Stomach (tissue), 19 donors: ENCODE measurements at regions of chr19 and their contacts with region 1.

Region 1: DNA sequence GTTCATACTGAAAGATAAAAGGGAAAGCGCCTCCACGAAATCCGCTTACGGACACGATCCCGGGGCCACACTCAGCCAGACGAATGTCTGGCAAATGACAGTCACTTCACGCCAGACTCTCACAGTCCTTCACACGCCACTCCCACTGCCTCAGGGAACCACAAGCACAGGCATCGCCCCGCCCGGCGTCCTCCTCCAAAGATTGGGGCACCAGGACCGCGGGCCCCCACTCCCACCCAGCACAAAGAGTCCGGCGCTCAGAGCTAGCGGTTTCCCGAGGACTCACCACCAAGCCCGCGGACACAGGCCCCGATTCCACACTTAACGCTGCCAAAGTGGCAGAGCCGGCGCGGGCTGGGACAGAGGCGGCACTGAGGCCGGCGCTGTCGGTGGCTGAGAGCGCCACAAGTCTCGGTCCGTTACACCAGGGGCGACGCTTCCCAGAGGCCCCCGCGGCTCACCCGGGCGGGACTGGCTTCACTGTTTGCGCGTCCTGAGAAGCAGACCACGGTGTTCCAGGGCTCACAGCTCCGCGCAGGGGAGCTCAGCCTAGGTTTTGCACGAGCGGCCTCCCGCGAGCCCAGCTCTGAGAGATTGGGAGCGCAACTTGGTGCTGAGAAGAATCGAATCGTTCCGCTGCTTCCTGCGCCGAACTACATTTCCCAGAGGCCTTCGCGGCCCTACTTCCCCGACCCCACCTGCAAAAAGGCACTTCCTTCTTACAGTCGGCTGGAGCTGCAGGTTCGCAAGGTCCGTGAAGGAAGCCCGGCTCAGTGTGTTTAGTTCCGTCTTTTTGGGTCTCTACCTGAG is at the start of gene ZNF569:
- DNase-seq: peak; percentile 90 to 98
- H3K4me3 ChIP-seq: peak within 1 kb of the TSS; percentile 68 to 98 (median 89)
- H3K27ac ChIP-seq: peak within 1 kb of the TSS; percentile 81 to 90 (median 86)
- H3K4me1 ChIP-seq: peaks cover 4 to 37% (median 30%) of the 10 kb centered on the region in 4 donors
- H3K27me3 ChIP-seq: no peaks in the 10 kb centered on the region
- CTCF ChIP-seq: no peak
- EP300 ChIP-seq: no peak
- POLR2A ChIP-seq: no peak
- total RNA-seq, gene ZNF569: 2.0 to 25.4 (median 7.2) TPM in 3 of 5 donors, not detected in the others

Region 2: DNA sequence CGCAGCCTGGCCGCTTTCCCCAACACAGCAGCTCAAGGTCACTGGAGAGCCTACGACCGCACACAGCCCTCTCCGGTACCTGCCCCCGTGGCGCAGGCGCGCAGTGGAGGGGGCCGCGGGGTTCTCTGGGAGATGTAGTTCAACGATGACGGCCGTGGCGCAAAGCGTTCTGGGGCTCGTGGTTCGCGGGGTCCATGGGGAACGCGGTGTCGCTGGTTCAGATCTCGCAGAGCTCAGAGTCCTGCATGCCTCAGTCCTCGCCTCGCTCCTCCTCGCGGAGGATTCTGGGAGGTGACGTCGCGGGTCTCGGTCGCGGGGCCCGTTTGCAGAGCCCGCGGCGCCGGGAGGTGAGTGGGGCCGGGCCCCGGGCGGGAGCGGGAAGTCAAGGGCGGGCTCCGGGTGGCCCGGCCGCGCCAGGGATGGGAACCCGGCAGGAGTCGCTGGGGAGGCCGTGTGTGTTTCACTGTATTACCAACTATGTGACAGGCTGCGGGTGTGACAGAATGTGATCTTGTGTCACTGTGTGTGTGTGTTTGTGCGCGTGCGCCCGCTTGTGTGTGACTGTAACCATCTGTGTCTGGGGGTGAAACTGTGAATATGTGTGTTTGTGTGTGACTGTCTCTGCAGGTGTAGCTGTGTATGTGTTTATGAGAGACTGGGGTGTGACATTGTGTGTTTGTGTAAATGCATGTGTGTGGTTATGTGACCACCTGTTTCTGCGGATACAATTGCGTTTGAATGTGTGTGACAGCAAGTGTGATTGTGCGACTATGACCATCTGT is 95.9 kb before region 1 on chr19 and contains the start of gene ZNF527:
- intact Hi-C with region 1: loop called (anchors 10 kb)
- DNase-seq: peak; percentile 97 to 99
- H3K4me3 ChIP-seq: peak within 1 kb of the TSS; percentile 57 to 73 (median 61)
- H3K27ac ChIP-seq: peak within 1 kb of the TSS; percentile 72 to 90 (median 88)
- H3K4me1 ChIP-seq: peaks cover 3 to 22% (median 10%) of the 10 kb centered on the region in 4 donors
- H3K27me3 ChIP-seq: no peaks in the 10 kb centered on the region
- CTCF ChIP-seq: no peak
- EP300 ChIP-seq: no peak
- POLR2A ChIP-seq: peak in 2 of 4 donors; percentile 6 to 57
- total RNA-seq, gene ZNF527: 2.7 to 20.6 (median 8.2) TPM

Region 3: DNA sequence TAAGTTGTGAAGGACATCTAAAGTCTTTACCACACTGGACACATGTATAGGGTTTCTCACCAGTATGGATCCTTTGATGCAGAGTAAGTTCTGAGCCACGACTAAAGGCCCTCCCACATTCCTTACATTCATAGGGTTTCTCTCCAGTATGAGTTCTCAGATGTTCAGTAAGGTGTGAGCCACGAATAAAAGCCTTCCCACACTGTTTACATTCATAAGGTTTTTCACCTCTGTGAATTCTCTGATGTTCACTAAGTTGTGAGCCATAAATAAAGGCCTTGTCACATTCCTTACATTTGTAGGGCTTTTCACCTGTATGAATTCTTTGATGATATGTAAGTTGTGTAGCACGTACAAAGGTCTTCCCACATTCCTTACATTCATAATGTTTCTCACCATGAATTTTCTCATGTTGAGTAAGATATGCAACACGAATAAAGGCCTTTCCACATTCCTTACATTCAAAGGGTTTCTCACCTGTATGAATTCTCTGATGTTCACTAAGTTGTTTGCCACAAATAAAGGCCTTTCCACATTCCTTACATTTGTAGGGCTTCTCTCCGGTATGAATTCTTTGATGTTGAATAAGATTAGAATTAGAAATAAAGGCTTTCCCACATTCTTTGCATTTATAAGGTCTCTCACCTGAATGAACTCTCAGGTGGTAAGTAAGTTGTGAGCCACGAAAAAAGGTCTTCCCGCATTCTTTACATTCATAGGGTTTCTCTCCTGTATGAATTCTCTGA is 97.8 kb after region 1 on chr19:
- intact Hi-C with region 1: no loop called
- DNase-seq: no peak
- H3K4me3 ChIP-seq: no peak overlapping the region
- H3K27ac ChIP-seq: no peak overlapping the region
- H3K4me1 ChIP-seq: no peaks in the 10 kb centered on the region
- H3K27me3 ChIP-seq: no peaks in the 10 kb centered on the region
- CTCF ChIP-seq: no peak
- EP300 ChIP-seq: no peak
- POLR2A ChIP-seq: no peak